HCT116 (cell line): ENCODE measurements at regions of chr5 and their contacts with region 1.

Region 1: DNA sequence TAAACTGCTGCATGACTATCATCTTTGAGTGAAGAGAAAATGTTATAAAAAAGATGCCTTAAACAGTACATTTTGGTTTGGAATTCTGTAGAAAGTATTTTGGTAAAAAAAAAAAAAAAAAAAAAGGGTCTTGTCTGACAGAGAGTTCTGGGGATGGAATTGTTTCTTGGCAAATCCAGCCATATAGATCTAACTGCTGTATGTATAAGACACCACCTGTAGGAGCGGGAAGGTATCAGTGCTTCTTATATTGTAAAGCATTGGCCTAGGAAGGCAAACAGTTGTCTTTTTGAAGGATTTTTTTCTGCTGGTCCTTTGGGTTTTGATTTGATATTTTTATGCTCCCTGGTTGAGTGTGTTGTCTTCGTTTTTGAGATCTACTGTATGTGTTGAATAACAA is 2.8 kb downstream of the PURA start:
- DNase-seq: no peak
- ATAC-seq: no peak
- H3K4me3 ChIP-seq: no peak overlapping the region
- H3K27ac ChIP-seq: no peak overlapping the region
- H3K4me1 ChIP-seq: peaks cover 4 to 23% of the 10 kb centered on the region in 2 experiments; a peak in 3 of 4 replicates
- H3K27me3 ChIP-seq: no peaks in the 10 kb centered on the region
- CTCF ChIP-seq: no peak
- POLR2A ChIP-seq: no peak
- RAD21 ChIP-seq: no peak

Region 2: GRCh38 chr5:140275843-140276242 is 159.1 kb after region 1 on chr5:
- CTCF ChIA-PET with region 1: no interaction called
- POLR2A ChIA-PET with region 1: no interaction called
- RAD21 ChIA-PET with region 1: interaction called in 1 of 2 experiments, 10 read pairs
- intact Hi-C with region 1: no loop called
- DNase-seq: no peak
- ATAC-seq: no peak
- H3K4me3 ChIP-seq: no peak overlapping the region
- H3K27ac ChIP-seq: no peak overlapping the region
- H3K4me1 ChIP-seq: no peaks in the 10 kb centered on the region
- H3K27me3 ChIP-seq: no peaks in the 10 kb centered on the region
- CTCF ChIP-seq: no peak
- POLR2A ChIP-seq: no peak
- RAD21 ChIP-seq: no peak